ENCODE measurements at regions of chrX and their contacts with region 1.

Region 1: DNA sequence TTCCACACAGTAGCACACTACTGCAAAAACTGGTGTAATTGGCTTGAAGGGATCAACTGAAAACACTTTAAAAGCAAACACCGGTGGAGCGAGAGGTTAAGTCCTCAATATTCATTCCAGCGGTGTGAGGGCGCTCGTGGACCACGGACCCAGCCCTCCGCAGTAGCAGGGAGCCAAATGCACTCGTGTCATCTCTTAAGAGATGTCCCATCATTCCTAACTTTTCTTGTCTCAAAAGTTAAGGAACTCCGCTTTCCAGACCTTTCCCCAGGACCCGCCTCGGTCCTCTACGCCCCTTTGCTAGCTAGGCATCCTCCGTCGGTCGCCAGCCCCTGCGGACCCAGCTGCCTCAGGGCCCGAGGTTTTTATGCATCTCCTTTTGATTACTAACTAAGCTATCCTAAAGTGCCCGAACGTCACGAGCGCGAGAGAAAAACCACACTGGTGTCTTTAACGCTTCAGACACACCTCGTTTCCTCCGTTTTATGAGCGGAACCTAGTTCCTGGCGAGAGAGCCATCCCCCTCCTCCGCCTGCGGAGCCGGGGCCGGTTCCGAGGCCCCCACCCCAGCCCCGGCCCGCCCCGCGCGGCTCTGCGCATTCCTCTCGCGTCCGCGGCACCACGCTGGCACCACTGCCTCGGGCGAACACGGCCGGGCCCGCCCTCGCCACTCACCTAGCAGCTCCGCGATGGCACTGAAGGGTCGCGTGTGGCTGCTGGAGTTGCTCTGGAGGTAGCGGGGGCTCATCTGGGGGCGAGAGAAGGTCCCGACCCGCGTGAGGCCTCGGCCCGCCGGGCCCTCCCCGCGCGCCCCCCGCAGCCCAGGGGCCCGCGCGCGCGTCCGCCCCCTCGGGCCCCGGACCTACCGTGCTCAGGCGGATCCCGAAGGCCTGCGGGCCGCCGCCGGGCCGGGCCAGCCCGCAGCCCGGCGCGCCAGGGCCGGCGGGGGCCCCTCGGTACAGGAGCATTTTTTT is 723 bp downstream of the MORC4 start:
- DNase-seq: peak; percentile 6 to 63 (median 49)
- ATAC-seq: peak; percentile 72
- H3K4me3 ChIP-seq: peak overlapping the region; percentile 53
- H3K4me3 Mint-ChIP-seq: peak overlapping the region; percentile 75 to 94 (median 86)
- H3K27ac ChIP-seq: peak overlapping the region; percentile 41
- H3K27ac Mint-ChIP-seq: peak overlapping the region in 8 of 9 donors; percentile 57 to 87 (median 71)
- H3K4me1 ChIP-seq: peaks cover 0 to 5% of the 10 kb centered on the region in 2 donors
- H3K4me1 Mint-ChIP-seq: peaks cover 5 to 13% (median 12%) of the 10 kb centered on the region in 7 donors
- H3K27me3 ChIP-seq: no peaks in the 10 kb centered on the region
- H3K27me3 Mint-ChIP-seq: peaks cover 0 to 2% (median 0%) of the 10 kb centered on the region in 5 donors

Region 2: DNA sequence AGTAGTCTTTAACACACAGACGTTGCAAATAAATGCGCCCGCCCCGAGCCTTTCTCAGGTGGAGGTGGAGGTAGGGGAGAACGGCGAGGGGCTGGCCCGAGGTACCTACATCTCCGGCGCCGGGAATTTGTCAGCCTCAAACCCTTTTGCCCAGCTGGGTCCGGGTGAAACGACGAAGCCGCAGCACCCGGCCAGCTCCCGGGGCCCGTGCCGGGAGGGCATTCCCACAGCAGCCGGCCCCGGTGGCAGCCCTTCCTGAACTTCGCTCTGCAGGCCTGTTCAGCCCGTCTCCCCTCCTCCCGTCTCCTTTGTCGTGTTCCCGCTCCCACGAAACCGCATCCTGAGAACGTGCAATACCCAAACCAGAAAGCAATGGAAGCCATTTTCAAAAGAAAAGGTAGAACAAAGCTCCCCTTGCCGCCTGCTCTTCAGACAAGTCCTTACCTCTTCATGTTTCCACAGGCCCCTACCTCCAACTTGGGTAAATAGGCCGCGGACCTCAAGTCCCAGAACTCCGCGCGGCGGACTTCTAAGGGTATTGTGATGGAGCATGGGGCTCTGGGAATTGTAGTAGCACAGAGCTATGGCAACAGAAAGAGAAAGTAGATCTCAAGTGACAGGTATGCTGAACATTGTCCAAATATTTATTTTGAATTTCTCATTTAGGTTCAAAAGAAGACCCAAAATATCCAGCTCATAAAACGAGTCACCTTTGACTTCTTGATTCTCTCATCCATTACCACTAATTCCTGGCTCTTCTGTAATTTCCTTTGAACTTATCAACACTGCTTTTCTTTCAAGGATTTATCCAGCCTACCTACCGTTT is 119.2 kb after region 1 on chrX and contains the start of gene RBM41:
- CTCF ChIA-PET with region 1: no interaction called
- POLR2A ChIA-PET with region 1: no interaction called
- intact Hi-C with region 1: loop called (anchors 1 kb)
- DNase-seq: peak; percentile 41 to 84 (median 73)
- ATAC-seq: peak; percentile 100
- H3K4me3 ChIP-seq: peak within 1 kb of the TSS; percentile 60
- H3K4me3 Mint-ChIP-seq: peak within 1 kb of the TSS; percentile 90 to 100 (median 99)
- H3K27ac ChIP-seq: peak within 1 kb of the TSS; percentile 80
- H3K27ac Mint-ChIP-seq: peak within 1 kb of the TSS; percentile 89 to 99 (median 97)
- H3K4me1 ChIP-seq: peaks cover 0 to 13% of the 10 kb centered on the region in 2 donors
- H3K4me1 Mint-ChIP-seq: peaks cover 21 to 51% (median 36%) of the 10 kb centered on the region in 7 donors
- H3K27me3 ChIP-seq: no peaks in the 10 kb centered on the region
- H3K27me3 Mint-ChIP-seq: no peaks in the 10 kb centered on the region
- total RNA-seq, gene RBM41: 11.5 to 31.3 (median 16.6) TPM

Region 3: GRCh38 chrX:107272431-107272921 is 273.2 kb after region 1 on chrX:
- CTCF ChIA-PET with region 1: interaction called, 3 read pairs
- POLR2A ChIA-PET with region 1: no interaction called
- intact Hi-C with region 1: loop called in 1 of 2 experiments (anchors 1 kb)
- DNase-seq: peak in 3 of 9 donors; percentile 5 to 18 (median 11)
- ATAC-seq: no peak
- H3K4me3 ChIP-seq: no peak overlapping the region
- H3K4me3 Mint-ChIP-seq: peak overlapping the region in 6 of 10 donors; percentile 27 to 74 (median 58)
- H3K27ac ChIP-seq: no peak overlapping the region
- H3K27ac Mint-ChIP-seq: no peak overlapping the region
- H3K4me1 ChIP-seq: no peaks in the 10 kb centered on the region
- H3K4me1 Mint-ChIP-seq: peaks cover 0 to 10% (median 4%) of the 10 kb centered on the region in 7 donors
- H3K27me3 ChIP-seq: no peaks in the 10 kb centered on the region
- H3K27me3 Mint-ChIP-seq: peaks cover 7 to 25% (median 13%) of the 10 kb centered on the region in 5 donors

Region 4: GRCh38 chrX:107537815-107538214 is 538.5 kb after region 1 on chrX:
- CTCF ChIA-PET with region 1: no interaction called
- POLR2A ChIA-PET with region 1: no interaction called
- intact Hi-C with region 1: loop called in 1 of 2 experiments (anchors 2 kb)
- DNase-seq: peak in 7 of 9 donors; percentile 17 to 43 (median 29)
- ATAC-seq: peak; percentile 57
- H3K4me3 ChIP-seq: no peak overlapping the region
- H3K4me3 Mint-ChIP-seq: no peak overlapping the region
- H3K27ac ChIP-seq: no peak overlapping the region
- H3K27ac Mint-ChIP-seq: no peak overlapping the region
- H3K4me1 ChIP-seq: no peaks in the 10 kb centered on the region
- H3K4me1 Mint-ChIP-seq: peaks cover 0 to 4% (median 0%) of the 10 kb centered on the region in 7 donors
- H3K27me3 ChIP-seq: no peaks in the 10 kb centered on the region
- H3K27me3 Mint-ChIP-seq: peaks cover 0 to 12% (median 6%) of the 10 kb centered on the region in 5 donors

Region 5: GRCh38 chrX:108091266-108091877 is 1092.1 kb after region 1 on chrX and contains the starts of genes ATG4A and PSMD10:
- CTCF ChIA-PET with region 1: no interaction called
- POLR2A ChIA-PET with region 1: no interaction called
- intact Hi-C with region 1: loop called (anchors 1 to 5 kb)
- DNase-seq: peak; percentile 65 to 91 (median 85)
- ATAC-seq: peak; percentile 97
- H3K4me3 ChIP-seq: peak within 1 kb of the TSS; percentile 85
- H3K4me3 Mint-ChIP-seq: no peak within 1 kb of the TSS
- H3K27ac ChIP-seq: peak within 1 kb of the TSS; percentile 88
- H3K27ac Mint-ChIP-seq: no peak within 1 kb of the TSS
- H3K4me1 ChIP-seq: no peaks in the 10 kb centered on the region
- H3K4me1 Mint-ChIP-seq: peaks cover 0 to 28% (median 15%) of the 10 kb centered on the region in 7 donors
- H3K27me3 ChIP-seq: no peaks in the 10 kb centered on the region
- H3K27me3 Mint-ChIP-seq: no peaks in the 10 kb centered on the region
- total RNA-seq, gene ATG4A: 6.7 to 11.4 (median 7.5) TPM
- total RNA-seq, gene PSMD10: 17.6 to 36.8 (median 22.1) TPM